GM23248 (cell line): ENCODE measurements at regions of chr3 and their contacts with region 1.

Region 1: DNA sequence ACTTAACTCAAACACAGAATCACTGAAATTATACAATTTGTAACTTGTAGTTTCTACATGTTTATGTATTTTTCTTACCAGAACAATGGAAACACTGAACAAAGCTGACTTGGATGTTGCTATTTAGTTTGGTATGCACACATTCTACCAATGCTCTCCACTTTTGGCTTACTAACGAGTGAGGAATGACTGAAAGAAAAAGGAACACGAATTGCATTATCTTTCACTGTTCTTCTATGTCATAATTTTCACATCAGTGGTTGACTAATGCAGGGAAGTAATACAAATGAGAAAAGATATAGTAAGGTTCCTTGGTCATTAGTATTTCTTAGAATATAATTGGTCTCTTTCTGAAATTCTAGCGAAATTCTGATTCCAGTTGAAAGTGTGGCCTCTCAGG is 9.8 kb upstream of the CNTN3 start:
- DNase-seq: peak; percentile 93
- H3K4me3 ChIP-seq: peak overlapping the region; percentile 30
- H3K27ac ChIP-seq: peak overlapping the region; percentile 85
- H3K4me1 ChIP-seq: peaks cover 24% of the 10 kb centered on the region
- H3K27me3 ChIP-seq: no peaks in the 10 kb centered on the region

Region 2: GRCh38 chr3:74347563-74348268 is 276.6 kb before region 1 on chr3:
- in situ Hi-C with region 1: no loop called
- DNase-seq: no peak
- H3K4me3 ChIP-seq: no peak overlapping the region
- H3K27ac ChIP-seq: no peak overlapping the region
- H3K4me1 ChIP-seq: peaks cover 7% of the 10 kb centered on the region; the same call in 1 of the 2 replicates
- H3K27me3 ChIP-seq: no peaks in the 10 kb centered on the region

Region 3: DNA sequence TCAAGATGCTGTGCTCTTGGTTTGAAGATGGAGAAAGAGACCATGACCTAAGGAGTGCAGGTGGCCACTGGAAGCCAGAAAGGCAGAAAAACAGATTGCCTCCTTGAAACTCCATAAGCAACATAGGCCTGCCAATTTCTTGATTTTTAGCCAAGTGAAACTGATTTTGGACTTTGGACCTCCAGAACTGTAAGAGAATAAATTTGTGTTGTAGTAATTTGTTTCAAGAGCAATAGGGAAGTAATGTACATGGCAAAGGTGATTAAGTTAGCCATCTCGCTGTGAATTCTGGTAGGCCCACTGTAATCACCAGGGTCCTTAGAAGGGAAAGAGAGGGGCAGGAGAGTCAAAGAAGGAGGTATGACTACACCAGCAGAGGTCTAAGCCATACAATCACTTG is 248.6 kb before region 1 on chr3:
- in situ Hi-C with region 1: loop called (anchors 10 kb)
- DNase-seq: no peak
- H3K4me3 ChIP-seq: no peak overlapping the region
- H3K27ac ChIP-seq: no peak overlapping the region
- H3K4me1 ChIP-seq: no peaks in the 10 kb centered on the region
- H3K27me3 ChIP-seq: no peaks in the 10 kb centered on the region

Region 4: DNA sequence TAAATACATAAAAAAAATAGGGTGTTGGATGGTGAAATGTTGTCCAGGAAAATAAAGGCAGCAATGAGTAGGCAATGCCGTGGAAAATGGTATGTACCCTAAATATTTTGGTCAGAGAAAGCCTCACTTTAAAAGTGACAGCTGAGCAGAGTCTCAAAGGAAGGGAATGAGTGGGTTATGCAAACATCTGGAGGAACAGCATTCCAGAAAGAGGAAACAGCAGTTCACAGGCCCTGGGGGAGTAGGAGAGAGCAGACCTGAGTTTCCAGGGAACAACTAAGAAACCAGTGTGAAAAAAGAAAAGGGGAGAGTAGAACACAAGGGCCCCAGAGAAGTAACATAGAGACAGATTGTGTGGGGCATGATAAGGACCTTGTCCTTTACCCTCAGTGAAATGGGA is 220.1 kb after region 1 on chr3:
- in situ Hi-C with region 1: no loop called
- DNase-seq: peak; percentile 31
- H3K4me3 ChIP-seq: peak overlapping the region; percentile 1; the same call in 1 of the 2 replicates
- H3K27ac ChIP-seq: no peak overlapping the region
- H3K4me1 ChIP-seq: peaks cover 18% of the 10 kb centered on the region
- H3K27me3 ChIP-seq: no peaks in the 10 kb centered on the region